ENCODE measurements at regions of chr16 and their contacts with region 1.

Region 1: DNA sequence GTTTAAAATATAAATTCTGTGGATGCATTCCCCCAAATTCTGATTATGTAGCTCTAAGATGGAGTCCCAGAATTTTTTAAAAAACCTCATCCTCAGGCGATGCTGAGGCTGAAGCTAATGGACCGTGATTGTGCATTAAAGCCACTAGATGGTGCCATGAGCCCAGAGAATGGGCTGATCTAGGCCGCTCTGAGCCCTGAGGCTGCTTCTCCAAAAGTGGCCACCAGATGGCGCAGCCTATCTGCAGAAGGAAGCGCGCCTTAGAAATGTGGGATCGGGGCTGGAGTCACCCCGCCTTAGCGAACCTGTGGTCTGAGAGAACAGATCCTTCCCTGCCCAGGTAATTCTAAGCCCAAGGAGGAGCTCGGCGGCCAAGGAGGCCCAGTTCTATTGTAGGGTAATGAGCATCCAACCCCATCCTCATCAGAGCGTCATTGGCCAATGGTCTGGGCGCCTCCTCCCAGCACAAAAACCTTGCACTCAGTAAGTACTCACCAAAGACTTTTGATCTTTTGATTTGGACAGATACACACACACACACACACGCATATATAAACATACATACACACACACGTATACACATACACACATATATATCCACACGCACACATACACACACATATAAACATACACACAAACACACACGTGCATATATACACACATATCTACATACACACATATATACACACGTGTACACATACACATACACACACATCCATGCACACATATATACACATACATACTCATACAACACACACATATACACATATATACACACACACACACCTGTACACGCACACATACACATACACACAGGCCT is 13.7 kb upstream of the MMP2 start:
- DNase-seq: peak; percentile 84 to 98
- H3K4me3 ChIP-seq: no peak overlapping the region
- H3K27ac ChIP-seq: no peak overlapping the region
- H3K4me1 ChIP-seq: no peaks in the 10 kb centered on the region
- H3K27me3 ChIP-seq: peaks cover 0 to 1% (median 0%) of the 10 kb centered on the region in 4 experiments; a peak in 3 of 7 replicates
- CTCF ChIP-seq: peak; percentile 85 to 100 (median 99)
- EP300 ChIP-seq: no peak; a peak in 1 of 3 replicates
- POLR2A ChIP-seq: no peak
- RAD21 ChIP-seq: peak; percentile 100

Region 2: GRCh38 chr16:55324491-55325447 is 140.5 kb before region 1 on chr16:
- CTCF ChIA-PET with region 1: no interaction called
- POLR2A ChIA-PET with region 1: no interaction called
- DNase-seq: peak in 1 of 2 experiments; percentile 73
- H3K4me3 ChIP-seq: peak overlapping the region; percentile 32 to 81 (median 50)
- H3K27ac ChIP-seq: no peak overlapping the region
- H3K4me1 ChIP-seq: peaks cover 0 to 16% (median 4%) of the 10 kb centered on the region in 4 experiments; a peak in 5 of 7 replicates
- H3K27me3 ChIP-seq: peaks cover 57 to 70% (median 68%) of the 10 kb centered on the region in 4 experiments
- CTCF ChIP-seq: no peak
- EP300 ChIP-seq: no peak
- POLR2A ChIP-seq: no peak
- RAD21 ChIP-seq: no peak

Region 3: GRCh38 chr16:55444754-55445485 is 20.4 kb before region 1 on chr16:
- CTCF ChIA-PET with region 1: interaction called, 17 read pairs
- POLR2A ChIA-PET with region 1: no interaction called
- DNase-seq: no peak
- H3K4me3 ChIP-seq: no peak overlapping the region
- H3K27ac ChIP-seq: no peak overlapping the region
- H3K4me1 ChIP-seq: no peaks in the 10 kb centered on the region
- H3K27me3 ChIP-seq: no peaks in the 10 kb centered on the region
- CTCF ChIP-seq: no peak
- EP300 ChIP-seq: no peak
- POLR2A ChIP-seq: no peak
- RAD21 ChIP-seq: no peak

Region 4: GRCh38 chr16:55513616-55514015 is 48.3 kb after region 1 on chr16:
- CTCF ChIA-PET with region 1: interaction called, 14 read pairs
- POLR2A ChIA-PET with region 1: no interaction called
- DNase-seq: no peak
- H3K4me3 ChIP-seq: no peak overlapping the region
- H3K27ac ChIP-seq: no peak overlapping the region
- H3K4me1 ChIP-seq: peaks cover 0 to 4% (median 2%) of the 10 kb centered on the region in 4 experiments; a peak in 4 of 7 replicates
- H3K27me3 ChIP-seq: no peaks in the 10 kb centered on the region; a peak in 1 of 7 replicates
- CTCF ChIP-seq: peak in 2 of 3 experiments; percentile 15 to 27; a peak in 2 of 4 replicates
- EP300 ChIP-seq: no peak
- POLR2A ChIP-seq: no peak
- RAD21 ChIP-seq: peak in 1 of 2 experiments; percentile 5; a peak in 1 of 4 replicates

Region 5: DNA sequence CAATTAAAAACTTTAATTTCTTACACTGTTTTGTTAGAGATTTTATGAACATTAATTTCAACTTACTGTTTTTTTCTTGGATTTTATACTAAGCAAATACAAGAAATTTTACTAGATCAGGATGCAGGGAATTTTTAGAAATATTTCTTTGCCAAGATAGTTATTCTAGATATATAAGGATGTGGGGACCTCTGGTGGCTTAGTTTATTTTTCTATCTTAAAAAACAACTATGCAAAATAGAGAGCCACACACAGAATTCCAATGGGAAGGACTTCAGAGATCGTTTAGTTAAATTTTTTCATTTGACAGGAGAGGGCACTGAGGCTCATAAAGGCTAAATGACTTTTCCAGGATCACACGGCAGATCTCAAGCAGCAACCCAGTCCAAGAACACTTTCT is 78.2 kb after region 1 on chr16:
- CTCF ChIA-PET with region 1: interaction called, 81 read pairs
- POLR2A ChIA-PET with region 1: no interaction called
- DNase-seq: no peak
- H3K4me3 ChIP-seq: no peak overlapping the region
- H3K27ac ChIP-seq: no peak overlapping the region
- H3K4me1 ChIP-seq: no peaks in the 10 kb centered on the region
- H3K27me3 ChIP-seq: no peaks in the 10 kb centered on the region; a peak in 1 of 7 replicates
- CTCF ChIP-seq: peak in 1 of 3 experiments; percentile 27; a peak in 1 of 4 replicates
- EP300 ChIP-seq: no peak
- POLR2A ChIP-seq: no peak
- RAD21 ChIP-seq: peak; percentile 40 to 47

Region 6: DNA sequence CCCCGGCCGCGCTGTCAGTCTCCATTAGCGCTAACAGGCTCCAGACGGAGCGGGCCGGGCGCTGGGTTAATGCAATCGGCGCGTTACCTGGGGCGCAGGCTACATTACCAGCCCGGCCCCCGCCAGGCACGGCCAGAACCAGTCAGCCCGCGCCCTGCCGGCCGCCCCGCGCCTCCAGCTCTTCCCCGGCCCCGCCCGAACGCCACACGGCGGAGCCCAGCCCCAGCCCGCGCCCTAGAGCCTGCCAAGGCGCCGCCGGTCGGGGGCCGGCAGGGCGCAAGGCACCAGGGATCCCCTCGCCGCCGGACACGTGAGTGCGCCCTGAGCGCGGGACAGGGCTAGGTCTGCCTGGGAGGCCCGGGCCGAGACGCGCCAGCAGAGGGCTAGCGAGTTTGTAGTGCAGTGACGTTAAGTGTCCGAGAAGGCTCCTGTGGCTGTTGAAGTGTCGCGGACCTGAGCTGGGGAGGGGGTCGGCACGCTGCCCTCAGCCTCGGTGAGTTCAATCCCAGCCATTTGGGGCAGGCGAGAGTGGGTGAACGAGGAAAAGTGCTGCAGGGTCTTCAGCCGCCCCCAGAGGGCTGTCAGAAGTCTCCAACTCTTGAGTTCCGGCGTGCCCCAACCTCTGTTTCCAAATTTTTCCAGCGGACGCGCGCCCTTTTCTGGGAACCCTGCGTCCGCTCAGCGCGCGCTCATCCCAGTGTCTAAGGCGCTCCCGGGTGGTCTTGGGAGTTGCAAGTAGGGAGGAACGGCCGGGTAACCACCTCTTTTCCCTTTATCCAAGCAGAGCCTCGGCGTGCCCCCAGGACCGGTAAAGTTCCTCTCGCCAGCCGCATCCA is 190.8 kb after region 1 on chr16 and contains the start of gene SLC6A2:
- CTCF ChIA-PET with region 1: interaction called, 25 read pairs
- POLR2A ChIA-PET with region 1: no interaction called
- DNase-seq: peak; percentile 21 to 80
- H3K4me3 ChIP-seq: peak within 1 kb of the TSS; percentile 45 to 76 (median 54)
- H3K27ac ChIP-seq: no peak within 1 kb of the TSS
- H3K4me1 ChIP-seq: peaks cover 0 to 3% (median 1%) of the 10 kb centered on the region in 4 experiments; a peak in 4 of 7 replicates
- H3K27me3 ChIP-seq: peaks cover 38 to 62% (median 51%) of the 10 kb centered on the region in 4 experiments
- CTCF ChIP-seq: peak; percentile 21 to 40 (median 39)
- EP300 ChIP-seq: no peak
- POLR2A ChIP-seq: no peak
- RAD21 ChIP-seq: no peak; a peak in 1 of 4 replicates
- total RNA-seq, gene SLC6A2: 0.40 TPM in 1 of 2 replicates, not detected in the other

Region 7: GRCh38 chr16:55678161-55678821 is 213.0 kb after region 1 on chr16:
- CTCF ChIA-PET with region 1: interaction called, 11 read pairs
- POLR2A ChIA-PET with region 1: no interaction called
- DNase-seq: no peak
- H3K4me3 ChIP-seq: no peak overlapping the region
- H3K27ac ChIP-seq: no peak overlapping the region
- H3K4me1 ChIP-seq: no peaks in the 10 kb centered on the region
- H3K27me3 ChIP-seq: no peaks in the 10 kb centered on the region
- CTCF ChIP-seq: no peak
- EP300 ChIP-seq: no peak
- POLR2A ChIP-seq: no peak
- RAD21 ChIP-seq: no peak

Measured in H1 (cell line).